A673 (cell line): ENCODE measurements at regions of chr14 and their contacts with region 1.

Region 1: DNA sequence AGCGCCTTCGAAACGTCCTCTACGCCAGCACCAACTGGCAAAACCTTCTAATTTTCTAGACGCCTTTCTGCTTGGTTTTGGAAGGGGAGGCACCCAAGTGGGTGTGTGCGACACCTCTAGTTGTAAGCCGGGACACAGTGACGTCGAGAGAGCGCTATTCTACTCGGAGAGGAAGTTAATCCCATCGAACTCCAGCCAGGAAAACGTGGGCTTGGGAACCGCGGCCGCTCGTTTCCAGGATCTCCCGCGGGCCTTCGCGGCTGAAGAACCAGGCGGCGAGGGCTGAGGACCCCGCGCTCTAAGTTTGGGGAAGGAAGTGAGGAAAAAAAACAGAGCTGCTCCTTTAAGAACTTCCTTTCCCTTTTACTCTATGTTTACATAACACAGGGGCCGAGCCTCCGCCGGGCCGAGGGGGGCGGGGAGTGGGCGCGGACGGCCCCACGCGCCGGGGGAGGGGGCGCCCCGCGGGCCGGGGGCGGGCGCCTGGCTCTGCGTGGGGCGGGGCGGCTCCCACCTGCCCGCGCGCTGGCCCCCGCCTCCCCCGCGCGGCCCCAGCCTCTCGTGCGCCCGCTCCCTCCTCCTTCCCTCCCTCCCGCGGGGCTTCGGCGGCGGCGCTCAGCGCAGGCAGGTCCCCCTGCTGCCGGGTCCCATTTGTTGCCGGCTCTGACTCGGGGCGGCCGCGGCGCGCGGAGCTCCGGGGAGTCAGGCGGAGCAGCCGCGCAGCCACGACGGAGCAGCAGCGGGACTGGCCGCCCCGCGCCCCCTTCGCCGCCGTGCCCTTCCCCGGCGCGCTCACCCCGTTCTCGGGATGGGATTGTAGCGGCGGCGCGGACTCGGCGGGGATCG is at the start of gene PELI2:
- DNase-seq: peak; percentile 86
- H3K4me3 ChIP-seq: peak within 1 kb of the TSS; percentile 86
- H3K27ac ChIP-seq: peak within 1 kb of the TSS; percentile 69
- H3K4me1 ChIP-seq: peaks cover 12% of the 10 kb centered on the region
- H3K27me3 ChIP-seq: peaks cover 37% of the 10 kb centered on the region
- CTCF ChIP-seq: no peak
- total RNA-seq, gene PELI2: 5.5 and 8.1 TPM in 2 replicates

Region 2: DNA sequence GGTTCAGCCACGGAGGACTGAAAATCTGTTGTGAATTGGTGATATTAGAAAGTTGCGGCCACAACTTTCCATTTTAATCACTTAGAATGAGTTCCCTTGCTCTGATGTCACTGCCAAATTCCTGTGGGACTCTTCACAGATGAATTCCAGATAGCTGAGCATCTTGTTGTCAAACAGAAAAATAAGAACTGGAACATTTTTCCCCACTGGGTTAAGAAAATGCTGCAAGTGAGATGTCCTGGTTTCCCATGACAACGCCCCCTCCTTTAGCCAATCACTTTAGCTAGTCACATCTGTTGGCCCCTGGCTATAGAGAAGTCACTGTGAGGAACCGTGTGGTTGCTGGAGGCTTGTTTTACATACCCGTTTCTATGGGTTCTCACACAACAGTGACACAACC is 402.1 kb before region 1 on chr14:
- CTCF ChIA-PET with region 1: no interaction called
- POLR2A ChIA-PET with region 1: no interaction called
- intact Hi-C with region 1: loop called (anchors 5 kb)
- DNase-seq: peak; percentile 22
- H3K4me3 ChIP-seq: no peak overlapping the region
- H3K27ac ChIP-seq: peak overlapping the region; percentile 90
- H3K4me1 ChIP-seq: peaks cover 28% of the 10 kb centered on the region
- H3K27me3 ChIP-seq: no peaks in the 10 kb centered on the region
- CTCF ChIP-seq: no peak

Region 3: DNA sequence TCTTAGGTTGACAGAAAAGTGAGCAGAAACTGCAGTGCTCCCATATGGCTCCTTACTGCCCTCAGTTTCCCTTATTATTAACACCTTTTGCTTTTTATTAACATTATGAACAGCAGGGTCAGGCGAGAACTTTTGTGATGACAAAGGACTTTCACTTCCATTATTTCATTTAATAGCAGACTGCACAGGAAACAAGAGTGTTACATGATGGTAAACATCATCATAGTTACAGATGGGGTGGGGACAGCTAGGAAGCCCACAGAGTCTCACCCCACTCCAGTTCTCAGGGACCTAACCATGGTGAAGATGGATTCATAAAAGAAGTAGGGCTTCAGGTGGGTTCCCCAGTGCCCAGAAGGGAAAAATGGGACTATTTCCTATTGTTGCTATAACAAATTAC is 109.8 kb before region 1 on chr14:
- CTCF ChIA-PET with region 1: no interaction called
- POLR2A ChIA-PET with region 1: no interaction called
- intact Hi-C with region 1: no loop called
- DNase-seq: no peak
- H3K4me3 ChIP-seq: no peak overlapping the region
- H3K27ac ChIP-seq: no peak overlapping the region
- H3K4me1 ChIP-seq: no peaks in the 10 kb centered on the region
- H3K27me3 ChIP-seq: no peaks in the 10 kb centered on the region
- CTCF ChIP-seq: no peak

Region 4: GRCh38 chr14:56247468-56248200 is 129.6 kb after region 1 on chr14:
- CTCF ChIA-PET with region 1: interaction called, 11 read pairs
- POLR2A ChIA-PET with region 1: no interaction called
- intact Hi-C with region 1: no loop called
- DNase-seq: no peak
- H3K4me3 ChIP-seq: no peak overlapping the region
- H3K27ac ChIP-seq: no peak overlapping the region
- H3K4me1 ChIP-seq: peaks cover 11% of the 10 kb centered on the region
- H3K27me3 ChIP-seq: no peaks in the 10 kb centered on the region
- CTCF ChIP-seq: peak; percentile 60